Activated CD8-positive, alpha-beta T cell treated with anti-CD3 and anti-CD28 coated beads for 36 hours (primary cell): ENCODE measurements at regions of chr17 and their contacts with region 1.

Region 1: GRCh38 chr17:82022981-82023374 is at the start of gene LRRC45:
- DNase-seq: peak; percentile 100
- ATAC-seq: peak; percentile 96
- H3K4me3 Mint-ChIP-seq: peak within 1 kb of the TSS; percentile 89
- H3K27ac Mint-ChIP-seq: peak within 1 kb of the TSS; percentile 34
- H3K4me1 Mint-ChIP-seq: peaks cover 12% of the 10 kb centered on the region
- H3K27me3 Mint-ChIP-seq: no peaks in the 10 kb centered on the region
- CTCF ChIP-seq: no peak
- total RNA-seq, gene LRRC45: 12.9 TPM

Region 2: DNA sequence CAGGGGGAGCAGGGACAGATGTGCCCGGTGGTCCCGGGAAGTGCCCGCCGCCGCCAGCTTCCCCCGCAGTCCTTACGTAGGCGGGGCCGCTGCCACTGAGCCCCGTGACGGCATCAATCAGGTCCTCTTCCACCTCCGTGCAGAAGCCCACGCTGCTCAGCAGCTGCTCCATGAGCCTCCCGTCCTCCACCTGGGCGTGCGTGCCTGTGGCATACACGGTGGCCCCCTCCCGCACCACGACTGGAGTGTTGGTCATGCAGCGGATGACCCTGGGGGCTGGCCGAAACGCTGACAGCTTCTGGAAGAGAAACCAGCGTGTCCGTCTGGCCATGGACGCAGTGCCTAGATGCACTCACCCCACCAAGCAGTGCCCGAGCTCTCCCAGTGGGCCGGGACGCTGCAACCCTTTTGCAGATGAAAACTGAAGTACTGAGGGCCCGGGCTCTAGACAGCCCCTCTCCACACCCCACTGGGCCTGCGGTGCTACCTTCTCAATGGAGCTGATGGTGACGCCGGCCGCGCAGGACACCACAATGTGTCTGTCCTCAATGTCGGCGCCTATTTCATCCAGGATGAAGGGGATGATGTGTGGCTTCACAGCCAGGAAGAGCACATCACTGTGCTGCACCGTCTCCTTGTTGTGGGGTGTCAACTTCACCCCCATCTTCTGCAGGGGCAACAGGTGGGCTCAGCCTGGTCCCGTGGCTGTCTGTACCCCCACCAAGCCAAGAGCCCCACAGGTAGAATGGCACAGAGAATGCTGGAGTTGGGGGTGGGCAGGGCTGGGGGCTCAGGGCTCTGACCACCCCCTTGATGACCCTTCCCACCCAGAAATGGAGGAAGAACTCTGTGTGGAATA is 87.9 kb before region 1 on chr17:
- CTCF ChIA-PET with region 1: interaction called, 12 read pairs
- POLR2A ChIA-PET with region 1: no interaction called
- intact Hi-C with region 1: no loop called
- DNase-seq: no peak
- ATAC-seq: no peak
- H3K4me3 Mint-ChIP-seq: peak overlapping the region; percentile 88
- H3K27ac Mint-ChIP-seq: no peak overlapping the region
- H3K4me1 Mint-ChIP-seq: peaks cover 41% of the 10 kb centered on the region
- H3K27me3 Mint-ChIP-seq: no peaks in the 10 kb centered on the region
- CTCF ChIP-seq: no peak

Region 3: GRCh38 chr17:81967533-81968395 is 55.2 kb before region 1 on chr17:
- CTCF ChIA-PET with region 1: interaction called, 23 read pairs
- POLR2A ChIA-PET with region 1: interaction called, 3 read pairs
- intact Hi-C with region 1: no loop called
- DNase-seq: peak; percentile 97
- ATAC-seq: peak; percentile 93
- H3K4me3 Mint-ChIP-seq: peak overlapping the region; percentile 56
- H3K27ac Mint-ChIP-seq: peak overlapping the region; percentile 80
- H3K4me1 Mint-ChIP-seq: peaks cover 17% of the 10 kb centered on the region
- H3K27me3 Mint-ChIP-seq: peaks cover under 1% of the 10 kb centered on the region
- CTCF ChIP-seq: no peak

Region 4: GRCh38 chr17:82003411-82004381 is 19.3 kb before region 1 on chr17:
- CTCF ChIA-PET with region 1: interaction called, 11 read pairs
- POLR2A ChIA-PET with region 1: no interaction called
- intact Hi-C with region 1: no loop called
- DNase-seq: peak; percentile 23
- ATAC-seq: peak; percentile 59
- H3K4me3 Mint-ChIP-seq: no peak overlapping the region
- H3K27ac Mint-ChIP-seq: no peak overlapping the region
- H3K4me1 Mint-ChIP-seq: no peaks in the 10 kb centered on the region
- H3K27me3 Mint-ChIP-seq: no peaks in the 10 kb centered on the region
- CTCF ChIP-seq: no peak

Region 5: DNA sequence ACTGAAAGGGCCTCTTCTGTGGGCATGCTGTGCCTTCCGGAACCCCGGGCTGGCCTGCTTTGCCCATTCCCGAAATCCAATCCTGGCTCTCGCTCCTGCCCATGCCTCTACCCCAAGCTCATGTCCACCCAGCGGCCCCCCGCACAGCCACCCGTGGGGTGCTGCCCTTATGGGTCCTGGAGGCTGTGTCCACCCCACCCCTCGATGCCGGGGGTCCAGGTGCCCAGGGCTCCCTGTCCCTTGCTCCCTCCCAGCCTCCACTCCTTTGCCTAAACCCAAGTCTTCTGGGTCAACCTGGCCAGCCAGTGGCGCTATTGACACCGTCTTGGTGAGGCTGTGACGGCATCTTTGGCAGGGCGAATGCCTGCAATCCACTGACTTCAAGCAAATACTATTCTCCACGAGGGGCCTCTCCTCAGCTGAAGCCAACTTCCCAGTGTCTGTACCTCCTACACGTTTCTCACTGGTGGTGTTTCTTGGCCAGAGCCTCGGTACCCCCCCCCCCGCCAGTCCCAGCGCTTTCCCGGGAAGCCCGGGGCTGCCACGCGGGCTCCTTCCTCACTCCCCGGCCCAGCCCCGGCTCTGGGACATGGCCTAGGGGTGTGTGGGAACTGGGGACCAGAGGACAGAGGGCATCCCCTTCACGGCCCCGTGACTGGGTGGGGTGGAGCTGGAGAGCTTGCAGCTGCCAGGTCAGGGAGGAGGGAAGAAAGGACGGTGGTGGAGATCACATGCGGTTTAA is 54.8 kb after region 1 on chr17:
- CTCF ChIA-PET with region 1: no interaction called
- POLR2A ChIA-PET with region 1: no interaction called
- intact Hi-C with region 1: no loop called
- DNase-seq: no peak
- ATAC-seq: no peak
- H3K4me3 Mint-ChIP-seq: no peak overlapping the region
- H3K27ac Mint-ChIP-seq: no peak overlapping the region
- H3K4me1 Mint-ChIP-seq: no peaks in the 10 kb centered on the region
- H3K27me3 Mint-ChIP-seq: no peaks in the 10 kb centered on the region
- CTCF ChIP-seq: no peak

Region 6: GRCh38 chr17:82153745-82154375 is 130.9 kb after region 1 on chr17:
- CTCF ChIA-PET with region 1: interaction called, 5 read pairs
- POLR2A ChIA-PET with region 1: no interaction called
- intact Hi-C with region 1: loop called (anchors 10 kb)
- DNase-seq: peak; percentile 89
- ATAC-seq: peak; percentile 100
- H3K4me3 Mint-ChIP-seq: no peak overlapping the region
- H3K27ac Mint-ChIP-seq: no peak overlapping the region
- H3K4me1 Mint-ChIP-seq: peaks cover 4% of the 10 kb centered on the region
- H3K27me3 Mint-ChIP-seq: no peaks in the 10 kb centered on the region
- CTCF ChIP-seq: peak; percentile 96